CD8-positive, alpha-beta memory T cell (primary cell): ENCODE measurements at regions of chr12 and their contacts with region 1.

Region 1: GRCh38 chr12:121793838-121794533 is 498 bp upstream of the RHOF start:
- DNase-seq: peak; percentile 91 to 97 (median 95)
- H3K4me3 ChIP-seq: peak overlapping the region; percentile 99
- H3K4me3 Mint-ChIP-seq: peak overlapping the region; percentile 76 to 93 (median 89)
- H3K27ac ChIP-seq: peak overlapping the region; percentile 79
- H3K27ac Mint-ChIP-seq: peak overlapping the region; percentile 84 to 99 (median 98)
- H3K4me1 ChIP-seq: peaks cover 64% of the 10 kb centered on the region
- H3K4me1 Mint-ChIP-seq: peaks cover 54 to 74% (median 58%) of the 10 kb centered on the region in 3 donors
- H3K27me3 ChIP-seq: no peaks in the 10 kb centered on the region
- H3K27me3 Mint-ChIP-seq: peaks cover 0 to 2% of the 10 kb centered on the region in 2 donors

Region 2: DNA sequence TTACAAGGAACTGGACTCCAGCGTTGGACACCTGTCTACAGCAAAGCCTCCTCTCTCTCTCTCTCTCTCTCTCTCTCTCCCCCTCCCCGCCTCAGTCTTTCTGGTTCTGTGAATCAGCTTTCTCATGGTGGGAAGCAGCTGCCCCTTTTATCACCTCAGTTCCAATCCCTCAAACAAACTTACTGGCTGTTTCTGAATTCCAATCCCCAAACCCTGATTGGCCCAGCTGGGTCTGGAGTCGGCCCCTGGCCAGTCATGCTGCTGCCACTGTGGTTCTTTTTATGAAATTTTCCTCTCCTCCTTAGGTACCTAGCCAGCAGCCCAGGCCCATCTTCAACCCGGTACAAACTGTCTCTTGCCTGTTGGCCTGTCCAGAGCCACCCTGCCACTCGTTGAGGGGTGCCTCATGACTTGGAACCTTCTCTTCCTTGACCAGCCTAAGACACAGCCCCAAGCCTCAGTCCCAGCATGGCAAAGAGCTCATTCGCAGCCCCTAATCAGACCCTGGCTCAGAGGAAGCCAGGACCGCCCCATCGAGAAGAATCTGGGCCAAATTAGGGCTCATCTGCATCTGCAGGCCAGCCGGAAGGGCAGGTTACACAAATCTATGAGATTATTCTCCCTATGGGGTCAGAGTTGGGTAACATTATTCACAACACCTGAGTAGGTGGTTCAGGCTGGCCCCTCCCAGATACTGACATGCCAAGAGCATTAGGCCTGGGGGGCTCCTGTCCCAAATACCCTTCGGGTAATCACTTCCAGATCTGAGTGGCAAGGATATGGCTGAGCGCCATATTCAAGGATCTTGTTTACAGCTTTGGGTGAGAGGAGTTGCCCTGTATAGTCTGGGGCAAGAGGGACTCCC is 115.0 kb before region 1 on chr12:
- CTCF ChIA-PET with region 1: interaction called, 11 read pairs
- POLR2A ChIA-PET with region 1: no interaction called
- DNase-seq: no peak
- H3K4me3 ChIP-seq: no peak overlapping the region
- H3K4me3 Mint-ChIP-seq: peak overlapping the region in 1 of 7 donors; percentile 24
- H3K27ac ChIP-seq: no peak overlapping the region
- H3K27ac Mint-ChIP-seq: peak overlapping the region in 6 of 8 donors; percentile 7 to 88 (median 59)
- H3K4me1 ChIP-seq: peaks cover 3% of the 10 kb centered on the region
- H3K4me1 Mint-ChIP-seq: peaks cover 6 to 11% (median 9%) of the 10 kb centered on the region in 3 donors
- H3K27me3 ChIP-seq: no peaks in the 10 kb centered on the region
- H3K27me3 Mint-ChIP-seq: peaks cover 0 to 4% of the 10 kb centered on the region in 2 donors

Region 3: GRCh38 chr12:121697098-121697698 is 96.8 kb before region 1 on chr12:
- CTCF ChIA-PET with region 1: interaction called, 104 read pairs
- POLR2A ChIA-PET with region 1: interaction called, 6 read pairs
- DNase-seq: peak in 2 of 5 donors; percentile 54 to 61
- H3K4me3 ChIP-seq: no peak overlapping the region
- H3K4me3 Mint-ChIP-seq: peak overlapping the region in 1 of 7 donors; percentile 32
- H3K27ac ChIP-seq: no peak overlapping the region
- H3K27ac Mint-ChIP-seq: no peak overlapping the region
- H3K4me1 ChIP-seq: peaks cover 4% of the 10 kb centered on the region
- H3K4me1 Mint-ChIP-seq: peaks cover 2 to 6% (median 5%) of the 10 kb centered on the region in 3 donors
- H3K27me3 ChIP-seq: no peaks in the 10 kb centered on the region
- H3K27me3 Mint-ChIP-seq: no peaks in the 10 kb centered on the region

Region 4: GRCh38 chr12:121738340-121738858 is 55.6 kb before region 1 on chr12:
- CTCF ChIA-PET with region 1: no interaction called
- POLR2A ChIA-PET with region 1: no interaction called
- DNase-seq: no peak
- H3K4me3 ChIP-seq: no peak overlapping the region
- H3K4me3 Mint-ChIP-seq: no peak overlapping the region
- H3K27ac ChIP-seq: peak overlapping the region; percentile 28
- H3K27ac Mint-ChIP-seq: peak overlapping the region in 1 of 8 donors; percentile 12
- H3K4me1 ChIP-seq: no peaks in the 10 kb centered on the region
- H3K4me1 Mint-ChIP-seq: no peaks in the 10 kb centered on the region
- H3K27me3 ChIP-seq: no peaks in the 10 kb centered on the region
- H3K27me3 Mint-ChIP-seq: no peaks in the 10 kb centered on the region

Region 5: DNA sequence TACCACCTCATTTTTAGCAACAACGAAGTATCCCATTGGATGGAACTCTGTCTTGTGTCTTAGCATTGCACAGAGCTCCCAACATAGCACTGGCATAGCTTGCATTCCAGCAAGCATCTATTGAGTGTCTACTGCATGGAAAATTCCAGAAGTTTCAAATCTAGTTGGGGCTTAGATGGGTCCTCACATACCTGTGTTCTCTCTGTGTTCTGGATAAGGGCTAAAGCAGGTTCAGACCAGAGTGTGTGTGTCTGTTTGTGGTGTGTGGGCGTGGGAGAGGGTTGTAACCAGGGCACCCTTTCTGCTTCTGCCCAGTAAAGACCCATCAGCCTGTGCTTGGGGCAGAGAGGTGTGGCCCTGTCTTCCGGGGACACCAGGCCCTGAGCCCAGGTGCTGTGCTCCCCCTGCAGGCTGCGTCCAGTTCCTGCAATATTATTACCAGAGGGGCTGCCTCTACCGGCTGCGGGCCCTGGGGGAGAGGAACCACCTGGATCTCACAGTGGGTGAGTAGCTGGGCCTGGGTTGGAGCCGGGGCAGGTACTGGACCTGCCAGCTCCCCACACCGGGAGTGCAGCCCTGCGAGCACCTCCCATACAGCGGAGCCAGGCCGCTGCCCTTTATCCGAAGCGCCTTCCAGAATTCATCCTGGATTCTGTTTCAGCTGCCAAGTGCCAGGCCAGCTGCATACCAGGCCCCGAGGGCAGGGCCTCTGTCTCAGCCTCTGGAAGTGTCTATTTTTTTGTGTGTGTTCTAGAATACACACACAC is 20.8 kb before region 1 on chr12:
- CTCF ChIA-PET with region 1: interaction called, 1,908 read pairs
- POLR2A ChIA-PET with region 1: interaction called, 45 read pairs
- DNase-seq: peak; percentile 70 to 86 (median 76)
- H3K4me3 ChIP-seq: no peak overlapping the region
- H3K4me3 Mint-ChIP-seq: no peak overlapping the region
- H3K27ac ChIP-seq: no peak overlapping the region
- H3K27ac Mint-ChIP-seq: peak overlapping the region; percentile 15 to 94 (median 60)
- H3K4me1 ChIP-seq: peaks cover 23% of the 10 kb centered on the region
- H3K4me1 Mint-ChIP-seq: peaks cover 10 to 23% (median 11%) of the 10 kb centered on the region in 3 donors
- H3K27me3 ChIP-seq: no peaks in the 10 kb centered on the region
- H3K27me3 Mint-ChIP-seq: no peaks in the 10 kb centered on the region

Region 6: DNA sequence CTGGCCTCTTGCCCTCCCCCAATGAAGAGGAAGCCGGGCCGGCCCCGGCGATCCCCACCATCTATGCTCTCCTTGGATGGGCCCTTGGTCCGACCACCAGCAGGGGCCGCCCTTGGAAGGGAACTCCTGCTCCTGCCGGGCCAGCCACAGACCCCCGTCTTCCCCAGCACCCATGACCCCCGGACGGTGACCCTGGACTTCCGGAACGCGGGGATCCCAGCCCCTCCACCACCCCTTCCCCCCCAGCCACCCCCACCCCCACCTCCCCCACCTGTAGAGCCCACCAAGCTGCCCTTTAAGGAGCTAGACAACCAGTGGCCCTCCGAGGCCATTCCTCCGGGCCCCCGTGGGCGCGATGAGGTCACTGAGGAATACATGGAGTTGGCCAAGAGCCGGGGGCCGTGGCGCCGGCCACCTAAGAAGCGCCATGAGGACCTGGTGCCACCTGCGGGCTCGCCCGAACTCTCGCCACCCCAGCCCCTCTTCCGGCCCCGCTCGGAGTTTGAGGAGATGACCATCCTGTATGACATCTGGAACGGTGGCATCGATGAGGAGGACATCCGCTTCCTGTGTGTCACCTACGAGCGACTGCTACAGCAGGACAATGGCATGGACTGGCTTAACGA is 29.2 kb after region 1 on chr12:
- CTCF ChIA-PET with region 1: interaction called, 1,908 read pairs
- POLR2A ChIA-PET with region 1: interaction called, 5 read pairs
- DNase-seq: peak in 1 of 5 donors; percentile 2
- H3K4me3 ChIP-seq: no peak overlapping the region
- H3K4me3 Mint-ChIP-seq: no peak overlapping the region
- H3K27ac ChIP-seq: no peak overlapping the region
- H3K27ac Mint-ChIP-seq: no peak overlapping the region
- H3K4me1 ChIP-seq: no peaks in the 10 kb centered on the region
- H3K4me1 Mint-ChIP-seq: peaks cover 0 to 8% (median 3%) of the 10 kb centered on the region in 3 donors
- H3K27me3 ChIP-seq: no peaks in the 10 kb centered on the region
- H3K27me3 Mint-ChIP-seq: no peaks in the 10 kb centered on the region

Region 7: GRCh38 chr12:121888478-121889266 is 94.7 kb after region 1 on chr12 and contains the start of gene PSMD9:
- CTCF ChIA-PET with region 1: interaction called, 84 read pairs
- POLR2A ChIA-PET with region 1: interaction called, 7 read pairs
- DNase-seq: peak; percentile 97 to 98 (median 98)
- H3K4me3 ChIP-seq: peak within 1 kb of the TSS; percentile 74
- H3K4me3 Mint-ChIP-seq: peak within 1 kb of the TSS; percentile 92 to 99 (median 99)
- H3K27ac ChIP-seq: peak within 1 kb of the TSS; percentile 88
- H3K27ac Mint-ChIP-seq: peak within 1 kb of the TSS; percentile 93 to 99 (median 99)
- H3K4me1 ChIP-seq: peaks cover 22% of the 10 kb centered on the region
- H3K4me1 Mint-ChIP-seq: peaks cover 28 to 51% (median 48%) of the 10 kb centered on the region in 3 donors
- H3K27me3 ChIP-seq: no peaks in the 10 kb centered on the region
- H3K27me3 Mint-ChIP-seq: peaks cover 0 to 3% of the 10 kb centered on the region in 2 donors
- total RNA-seq, gene PSMD9: 83.7 to 89.9 TPM